CD4-positive, alpha-beta memory T cell (primary cell): ENCODE measurements at regions of chr1 and their contacts with region 1.

Region 1: GRCh38 chr1:155934097-155934935 is at the start of gene KHDC4:
- DNase-seq: peak; percentile 93 to 98 (median 97)
- H3K4me3 ChIP-seq: peak within 1 kb of the TSS; percentile 71 to 86
- H3K4me3 Mint-ChIP-seq: no peak within 1 kb of the TSS
- H3K27ac ChIP-seq: peak within 1 kb of the TSS; percentile 95
- H3K27ac Mint-ChIP-seq: peak within 1 kb of the TSS in 1 of 7 donors; percentile 73
- H3K4me1 ChIP-seq: peaks cover 50% of the 10 kb centered on the region
- H3K4me1 Mint-ChIP-seq: peaks cover 10 to 24% (median 16%) of the 10 kb centered on the region in 4 donors
- H3K27me3 ChIP-seq: no peaks in the 10 kb centered on the region
- H3K27me3 Mint-ChIP-seq: no peaks in the 10 kb centered on the region
- total RNA-seq, gene KHDC4: 127 to 134 TPM

Region 2: DNA sequence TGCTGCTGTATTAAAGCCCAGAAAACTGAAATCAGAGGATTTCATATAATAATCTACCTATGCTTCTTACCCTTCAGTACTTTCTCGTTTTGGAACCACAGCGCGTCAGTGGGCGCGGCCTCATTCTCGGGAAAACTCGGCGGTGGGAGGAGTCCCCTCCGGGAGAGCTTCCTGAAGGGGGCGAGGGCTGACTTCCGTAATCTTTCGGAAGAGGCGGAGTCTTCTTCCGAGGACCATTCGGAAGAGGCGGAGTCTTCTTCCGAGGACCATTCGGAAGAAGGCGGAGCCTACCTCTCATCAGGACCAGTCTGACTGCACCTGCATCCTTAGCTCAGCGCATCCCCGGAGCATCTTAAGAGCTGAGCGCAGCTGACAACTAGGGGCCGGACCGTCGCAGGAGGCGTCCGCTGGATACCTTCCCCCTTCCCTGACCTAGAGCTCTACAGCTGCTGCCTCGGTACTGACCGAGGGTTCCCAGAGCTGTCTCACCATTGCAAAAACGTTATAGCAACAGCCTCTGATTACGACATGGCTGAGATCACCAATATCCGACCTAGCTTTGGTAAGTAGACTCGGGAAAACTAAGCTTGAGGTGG is 75.0 kb before region 1 on chr1 and contains the start of gene SYT11:
- CTCF ChIA-PET with region 1: interaction called, 4 read pairs
- POLR2A ChIA-PET with region 1: interaction called, 17 read pairs
- intact Hi-C with region 1: loop called (anchors 1 kb)
- DNase-seq: peak; percentile 88 to 94 (median 91)
- H3K4me3 ChIP-seq: peak within 1 kb of the TSS; percentile 36 to 68
- H3K4me3 Mint-ChIP-seq: peak within 1 kb of the TSS; percentile 88 to 99 (median 90)
- H3K27ac ChIP-seq: peak within 1 kb of the TSS; percentile 73
- H3K27ac Mint-ChIP-seq: peak within 1 kb of the TSS; percentile 88 to 100 (median 96)
- H3K4me1 ChIP-seq: peaks cover 48% of the 10 kb centered on the region
- H3K4me1 Mint-ChIP-seq: peaks cover 18 to 53% (median 33%) of the 10 kb centered on the region in 4 donors
- H3K27me3 ChIP-seq: no peaks in the 10 kb centered on the region
- H3K27me3 Mint-ChIP-seq: no peaks in the 10 kb centered on the region
- total RNA-seq, gene SYT11: 17.7 to 18.2 TPM

Region 3: GRCh38 chr1:155920717-155921116 is 13.6 kb before region 1 on chr1:
- CTCF ChIA-PET with region 1: interaction called, 4 read pairs
- POLR2A ChIA-PET with region 1: interaction called, 11 read pairs
- intact Hi-C with region 1: no loop called
- DNase-seq: no peak
- H3K4me3 ChIP-seq: no peak overlapping the region
- H3K4me3 Mint-ChIP-seq: no peak overlapping the region
- H3K27ac ChIP-seq: no peak overlapping the region
- H3K27ac Mint-ChIP-seq: peak overlapping the region in 1 of 7 donors; percentile 29
- H3K4me1 ChIP-seq: no peaks in the 10 kb centered on the region
- H3K4me1 Mint-ChIP-seq: peaks cover 0 to 2% (median 0%) of the 10 kb centered on the region in 4 donors
- H3K27me3 ChIP-seq: no peaks in the 10 kb centered on the region
- H3K27me3 Mint-ChIP-seq: no peaks in the 10 kb centered on the region

Region 4: DNA sequence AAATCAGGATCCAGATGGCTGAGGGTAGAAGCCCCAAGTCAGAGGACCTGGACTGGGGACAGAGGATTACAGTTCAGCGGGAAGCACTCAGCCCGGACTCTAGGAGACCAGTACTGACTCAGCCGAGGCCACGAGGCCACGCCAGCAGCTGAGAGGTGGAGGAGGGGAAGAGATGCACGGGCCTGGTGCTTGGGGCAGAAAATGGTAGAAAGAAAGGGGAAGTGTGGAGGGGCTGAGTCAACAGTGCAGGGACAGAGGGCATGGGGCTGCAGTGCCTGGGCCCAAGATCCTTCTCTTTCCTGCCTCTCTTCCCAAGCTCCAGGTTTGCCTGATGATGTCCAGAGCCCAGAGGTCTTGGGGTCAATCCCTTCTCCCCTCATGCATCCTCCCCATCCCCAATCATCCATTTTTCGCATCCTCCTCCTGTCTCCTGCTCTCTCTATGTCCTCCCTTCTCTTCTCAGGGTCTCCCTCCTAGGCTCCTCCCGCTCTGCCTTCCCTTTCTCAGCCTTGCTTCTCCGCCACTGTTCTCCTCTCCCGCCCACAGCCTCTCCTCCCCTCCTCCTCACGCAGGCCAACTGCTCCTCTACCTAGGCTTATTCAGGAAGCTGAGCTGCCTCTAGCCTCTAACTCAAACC is 36.3 kb after region 1 on chr1:
- CTCF ChIA-PET with region 1: interaction called, 25 read pairs
- POLR2A ChIA-PET with region 1: interaction called, 179 read pairs
- intact Hi-C with region 1: no loop called
- DNase-seq: no peak
- H3K4me3 ChIP-seq: no peak overlapping the region
- H3K4me3 Mint-ChIP-seq: peak overlapping the region; percentile 66 to 88 (median 74)
- H3K27ac ChIP-seq: peak overlapping the region; percentile 44
- H3K27ac Mint-ChIP-seq: peak overlapping the region; percentile 81 to 96 (median 93)
- H3K4me1 ChIP-seq: peaks cover 96% of the 10 kb centered on the region
- H3K4me1 Mint-ChIP-seq: peaks cover 73 to 98% (median 88%) of the 10 kb centered on the region in 4 donors
- H3K27me3 ChIP-seq: no peaks in the 10 kb centered on the region
- H3K27me3 Mint-ChIP-seq: no peaks in the 10 kb centered on the region

Region 5: GRCh38 chr1:155989242-155990004 is 55.1 kb after region 1 on chr1:
- CTCF ChIA-PET with region 1: interaction called, 67 read pairs
- POLR2A ChIA-PET with region 1: interaction called, 179 read pairs
- intact Hi-C with region 1: loop called (anchors 1 kb)
- DNase-seq: peak; percentile 77 to 84 (median 79)
- H3K4me3 ChIP-seq: no peak overlapping the region
- H3K4me3 Mint-ChIP-seq: peak overlapping the region in 1 of 8 donors; percentile 63
- H3K27ac ChIP-seq: no peak overlapping the region
- H3K27ac Mint-ChIP-seq: peak overlapping the region in 2 of 7 donors; percentile 19 to 91
- H3K4me1 ChIP-seq: peaks cover 12% of the 10 kb centered on the region
- H3K4me1 Mint-ChIP-seq: peaks cover 6 to 16% (median 8%) of the 10 kb centered on the region in 4 donors
- H3K27me3 ChIP-seq: no peaks in the 10 kb centered on the region
- H3K27me3 Mint-ChIP-seq: no peaks in the 10 kb centered on the region

Region 6: DNA sequence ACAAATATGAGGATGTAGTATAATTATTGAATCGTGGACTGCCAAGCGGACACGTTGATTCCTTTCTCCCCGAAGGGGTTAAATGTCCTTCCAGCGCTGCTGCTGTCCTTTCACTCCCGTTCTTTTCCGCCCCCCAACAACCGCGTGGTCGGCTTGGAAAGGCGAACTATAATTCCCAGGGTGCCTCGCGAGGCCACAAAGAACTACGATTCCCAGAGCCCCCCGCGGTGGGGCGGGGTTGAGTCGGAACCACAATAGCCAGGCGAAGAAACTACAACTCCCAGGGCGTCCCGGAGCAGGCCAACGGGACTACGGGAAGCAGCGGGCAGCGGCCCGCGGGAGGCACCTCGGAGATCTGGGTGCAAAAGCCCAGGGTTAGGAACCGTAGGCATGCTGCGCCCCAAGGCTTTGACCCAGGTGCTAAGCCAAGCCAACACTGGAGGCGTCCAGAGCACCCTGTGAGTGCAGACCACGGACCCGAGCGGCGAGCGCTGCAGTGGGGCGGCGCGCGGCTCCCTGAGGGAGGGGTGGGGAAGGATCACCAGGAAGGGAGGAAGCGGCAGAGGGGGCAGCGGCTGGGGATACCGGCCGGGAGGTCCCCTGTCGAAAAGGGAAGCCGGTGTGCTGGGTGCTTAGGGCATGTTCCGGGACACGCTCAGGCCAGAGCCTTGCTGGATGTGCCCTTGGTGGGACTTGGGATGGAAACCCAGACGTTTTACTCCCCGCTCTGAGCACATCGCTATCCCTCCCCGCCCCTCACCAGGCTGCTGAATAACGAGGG is 120.4 kb after region 1 on chr1 and contains the start of gene LAMTOR2:
- CTCF ChIA-PET with region 1: interaction called, 4 read pairs
- POLR2A ChIA-PET with region 1: interaction called, 6 read pairs
- intact Hi-C with region 1: loop called (anchors 1 kb)
- DNase-seq: peak; percentile 91 to 95 (median 93)
- H3K4me3 ChIP-seq: peak within 1 kb of the TSS; percentile 96 to 99
- H3K4me3 Mint-ChIP-seq: peak within 1 kb of the TSS; percentile 93 to 98 (median 96)
- H3K27ac ChIP-seq: peak within 1 kb of the TSS; percentile 84
- H3K27ac Mint-ChIP-seq: peak within 1 kb of the TSS; percentile 93 to 99 (median 96)
- H3K4me1 ChIP-seq: peaks cover 17% of the 10 kb centered on the region
- H3K4me1 Mint-ChIP-seq: peaks cover 13 to 48% (median 28%) of the 10 kb centered on the region in 4 donors
- H3K27me3 ChIP-seq: no peaks in the 10 kb centered on the region
- H3K27me3 Mint-ChIP-seq: no peaks in the 10 kb centered on the region
- total RNA-seq, gene LAMTOR2: 33.0 to 35.5 TPM

Region 7: GRCh38 chr1:156212833-156213643 is 278.7 kb after region 1 on chr1 and contains the start of gene PMF1:
- CTCF ChIA-PET with region 1: no interaction called
- POLR2A ChIA-PET with region 1: no interaction called
- intact Hi-C with region 1: loop called (anchors 5 kb)
- DNase-seq: peak; percentile 94 to 98 (median 95)
- H3K4me3 ChIP-seq: peak within 1 kb of the TSS; percentile 83 to 93
- H3K4me3 Mint-ChIP-seq: peak within 1 kb of the TSS; percentile 93 to 99 (median 96)
- H3K27ac ChIP-seq: peak within 1 kb of the TSS; percentile 98
- H3K27ac Mint-ChIP-seq: peak within 1 kb of the TSS; percentile 97 to 100 (median 99)
- H3K4me1 ChIP-seq: peaks cover 29% of the 10 kb centered on the region
- H3K4me1 Mint-ChIP-seq: peaks cover 15 to 43% (median 31%) of the 10 kb centered on the region in 4 donors
- H3K27me3 ChIP-seq: no peaks in the 10 kb centered on the region
- H3K27me3 Mint-ChIP-seq: no peaks in the 10 kb centered on the region
- total RNA-seq, gene PMF1: 39.0 to 40.2 TPM